ENCODE measurements at regions of chr10 and their contacts with region 1.

Region 1: GRCh38 chr10:132654702-132655661 is 117.4 kb downstream of the INPP5A start:
- DNase-seq: peak; percentile 7 to 59 (median 35)
- ATAC-seq: peak; percentile 74
- H3K4me3 ChIP-seq: no peak overlapping the region
- H3K4me3 Mint-ChIP-seq: peak overlapping the region in 1 of 10 donors; percentile 32
- H3K27ac ChIP-seq: no peak overlapping the region
- H3K27ac Mint-ChIP-seq: peak overlapping the region in 3 of 9 donors; percentile 53 to 60 (median 57)
- H3K4me1 ChIP-seq: no peaks in the 10 kb centered on the region
- H3K4me1 Mint-ChIP-seq: peaks cover 0 to 15% (median 8%) of the 10 kb centered on the region in 7 donors
- H3K27me3 ChIP-seq: no peaks in the 10 kb centered on the region
- H3K27me3 Mint-ChIP-seq: no peaks in the 10 kb centered on the region

Region 2: DNA sequence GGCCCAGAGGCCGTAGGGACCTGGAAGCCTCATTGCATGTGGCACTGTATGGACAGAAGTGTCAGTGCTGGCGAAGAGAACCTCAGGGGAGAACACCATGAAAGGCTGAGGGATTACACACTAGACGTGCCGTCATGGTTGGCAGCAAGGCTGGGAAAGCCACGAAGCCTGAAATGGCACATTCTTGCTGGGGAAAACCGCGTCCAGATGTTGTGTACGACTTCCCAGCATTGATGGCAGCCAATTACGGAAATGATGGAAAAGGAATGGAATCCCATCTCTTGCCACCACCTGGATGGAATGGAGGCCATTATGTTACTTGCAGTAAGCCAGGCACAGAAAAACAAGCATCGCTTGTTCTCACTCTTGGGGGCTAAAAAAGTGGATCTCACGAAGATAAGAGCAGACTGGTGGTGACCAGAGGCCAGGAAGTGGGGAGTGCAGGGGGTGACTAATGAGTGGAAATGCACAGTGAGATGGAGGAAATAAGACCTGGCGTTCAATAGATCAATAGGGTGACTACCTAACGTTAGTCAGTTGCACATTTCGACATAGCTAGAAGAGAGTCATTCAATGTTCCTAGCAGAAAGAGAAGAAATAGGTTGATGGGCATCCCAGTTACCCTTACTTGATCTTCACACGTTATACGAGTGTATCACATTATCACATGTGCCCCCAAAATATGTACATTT is 272.6 kb before region 1 on chr10:
- CTCF ChIA-PET with region 1: no interaction called
- POLR2A ChIA-PET with region 1: no interaction called
- intact Hi-C with region 1: no loop called
- DNase-seq: no peak
- ATAC-seq: no peak
- H3K4me3 ChIP-seq: no peak overlapping the region
- H3K4me3 Mint-ChIP-seq: no peak overlapping the region
- H3K27ac ChIP-seq: no peak overlapping the region
- H3K27ac Mint-ChIP-seq: peak overlapping the region in 1 of 9 donors; percentile 40
- H3K4me1 ChIP-seq: peaks cover under 1% of the 10 kb centered on the region in 2 donors
- H3K4me1 Mint-ChIP-seq: peaks cover 4 to 20% (median 10%) of the 10 kb centered on the region in 7 donors
- H3K27me3 ChIP-seq: no peaks in the 10 kb centered on the region
- H3K27me3 Mint-ChIP-seq: peaks cover 0 to 4% (median 0%) of the 10 kb centered on the region in 5 donors

Region 3: GRCh38 chr10:132643709-132644526 is 11.1 kb before region 1 on chr10:
- CTCF ChIA-PET with region 1: no interaction called
- POLR2A ChIA-PET with region 1: no interaction called
- intact Hi-C with region 1: no loop called
- DNase-seq: no peak
- ATAC-seq: no peak
- H3K4me3 ChIP-seq: no peak overlapping the region
- H3K4me3 Mint-ChIP-seq: no peak overlapping the region
- H3K27ac ChIP-seq: no peak overlapping the region
- H3K27ac Mint-ChIP-seq: no peak overlapping the region
- H3K4me1 ChIP-seq: no peaks in the 10 kb centered on the region
- H3K4me1 Mint-ChIP-seq: peaks cover 6 to 46% (median 28%) of the 10 kb centered on the region in 7 donors
- H3K27me3 ChIP-seq: no peaks in the 10 kb centered on the region
- H3K27me3 Mint-ChIP-seq: peaks cover 0 to 4% (median 0%) of the 10 kb centered on the region in 5 donors

Region 4: GRCh38 chr10:132793871-132794849 is 139.2 kb after region 1 on chr10:
- CTCF ChIA-PET with region 1: no interaction called
- POLR2A ChIA-PET with region 1: no interaction called
- intact Hi-C with region 1: loop called in 1 of 2 experiments (anchors 10 kb)
- DNase-seq: no peak
- ATAC-seq: no peak
- H3K4me3 ChIP-seq: no peak overlapping the region
- H3K4me3 Mint-ChIP-seq: no peak overlapping the region
- H3K27ac ChIP-seq: no peak overlapping the region
- H3K27ac Mint-ChIP-seq: no peak overlapping the region
- H3K4me1 ChIP-seq: no peaks in the 10 kb centered on the region
- H3K4me1 Mint-ChIP-seq: no peaks in the 10 kb centered on the region
- H3K27me3 ChIP-seq: peaks cover 0 to 3% of the 10 kb centered on the region in 2 donors
- H3K27me3 Mint-ChIP-seq: peaks cover 0 to 8% (median 5%) of the 10 kb centered on the region in 5 donors

Region 5: GRCh38 chr10:132836832-132837540 is 182.0 kb after region 1 on chr10:
- CTCF ChIA-PET with region 1: no interaction called
- POLR2A ChIA-PET with region 1: no interaction called
- intact Hi-C with region 1: loop called (anchors 1 to 2 kb)
- DNase-seq: peak in 7 of 9 donors; percentile 40 to 67 (median 51)
- ATAC-seq: peak; percentile 58
- H3K4me3 ChIP-seq: no peak overlapping the region
- H3K4me3 Mint-ChIP-seq: no peak overlapping the region
- H3K27ac ChIP-seq: no peak overlapping the region
- H3K27ac Mint-ChIP-seq: no peak overlapping the region
- H3K4me1 ChIP-seq: no peaks in the 10 kb centered on the region
- H3K4me1 Mint-ChIP-seq: no peaks in the 10 kb centered on the region
- H3K27me3 ChIP-seq: no peaks in the 10 kb centered on the region
- H3K27me3 Mint-ChIP-seq: peaks cover 0 to 9% (median 2%) of the 10 kb centered on the region in 5 donors

Measured in naive thymus-derived CD4-positive, alpha-beta T cell (primary cell).